ENCODE measurements at regions of chr5 and their contacts with region 1.

Region 1: DNA sequence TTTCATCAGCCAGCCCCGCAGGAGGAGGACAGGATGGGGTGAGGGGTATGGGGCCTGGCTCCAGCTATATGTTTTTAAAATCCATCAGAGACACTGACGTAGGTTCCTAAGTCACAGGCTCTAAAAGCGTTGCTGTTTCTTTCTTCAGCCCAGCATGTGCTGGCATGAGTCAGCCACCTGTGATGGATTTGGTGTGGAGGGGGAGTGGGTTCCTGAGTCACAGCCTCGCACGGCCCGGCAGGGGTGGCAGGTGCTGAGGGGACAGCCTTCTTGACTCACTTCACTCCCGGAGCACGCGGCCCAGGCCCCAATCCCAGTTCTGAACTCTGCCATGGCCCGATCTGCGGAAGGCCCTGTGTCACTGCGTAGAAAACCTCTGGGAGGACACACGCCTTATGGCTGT is 38.8 kb upstream of the RPL26L1 start:
- ATAC-seq: peak in 6 of 8 experiments; percentile 38 to 97 (median 95)
- H3K4me3 ChIP-seq: no peak overlapping the region
- H3K27ac ChIP-seq: peak overlapping the region; percentile 68 to 81
- H3K4me1 ChIP-seq: peaks cover 9 to 27% of the 10 kb centered on the region in 2 donors

Region 2: GRCh38 chr5:172707285-172708182 is 212.9 kb before region 1 on chr5:
- in situ Hi-C with region 1: loop called in 6 of 9 experiments (anchors 10 to 25 kb)
- ATAC-seq: peak; percentile 83 to 99 (median 88)
- H3K4me3 ChIP-seq: no peak overlapping the region
- H3K27ac ChIP-seq: no peak overlapping the region
- H3K4me1 ChIP-seq: peaks cover 2 to 8% of the 10 kb centered on the region in 2 donors

Region 3: DNA sequence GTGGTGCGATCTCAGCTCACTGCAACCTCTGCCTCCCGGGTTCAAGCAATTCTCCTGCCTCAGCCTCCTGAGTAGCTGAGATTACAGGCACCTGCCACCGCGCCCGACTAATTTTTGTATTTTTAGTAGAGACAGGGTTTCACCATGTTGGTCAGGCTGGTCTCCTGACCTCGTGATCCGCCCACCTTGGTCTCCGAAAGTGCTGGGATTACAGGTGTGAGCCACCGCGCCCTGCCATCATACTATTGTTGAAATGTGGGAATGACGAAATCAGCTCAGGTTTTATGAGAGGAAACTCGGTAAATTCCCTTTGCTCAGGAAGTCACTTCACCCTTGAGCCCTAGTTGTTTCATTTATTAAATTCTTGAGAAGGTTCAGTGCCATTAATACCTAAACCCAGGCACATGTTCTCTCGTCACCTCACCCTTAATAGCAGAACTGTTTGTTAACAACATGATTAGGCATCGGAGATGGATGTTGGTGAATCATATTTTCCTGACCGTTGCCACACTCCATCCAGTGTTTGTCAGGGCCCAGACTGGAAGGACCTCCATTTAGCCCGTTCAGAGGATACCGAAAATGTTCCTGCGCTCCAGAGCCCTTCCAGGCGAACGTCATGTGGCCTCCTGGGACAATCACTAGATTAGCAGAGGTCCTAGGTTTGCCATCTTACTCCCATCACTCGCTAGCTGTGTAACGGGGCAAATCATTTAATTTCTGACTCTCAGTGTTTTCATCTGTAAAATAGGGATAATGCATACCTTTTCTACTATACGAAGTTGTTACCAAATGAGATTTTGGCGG is 115.7 kb after region 1 on chr5:
- in situ Hi-C with region 1: no loop called
- ATAC-seq: no peak
- H3K4me3 ChIP-seq: no peak overlapping the region
- H3K27ac ChIP-seq: no peak overlapping the region
- H3K4me1 ChIP-seq: peaks cover 0 to 6% of the 10 kb centered on the region in 2 donors

Region 4: GRCh38 chr5:173395257-173395932 is 474.9 kb after region 1 on chr5:
- in situ Hi-C with region 1: no loop called
- ATAC-seq: no peak
- H3K4me3 ChIP-seq: no peak overlapping the region
- H3K27ac ChIP-seq: no peak overlapping the region
- H3K4me1 ChIP-seq: no peaks in the 10 kb centered on the region